ENCODE measurements at regions of chr20 and their contacts with region 1.

Region 1: GRCh38 chr20:6017880-6018279 is 36.0 kb downstream of the LRRN4 start:
- DNase-seq: no peak
- ATAC-seq: no peak
- H3K4me3 ChIP-seq: no peak overlapping the region
- H3K27ac ChIP-seq: no peak overlapping the region
- H3K4me1 ChIP-seq: no peaks in the 10 kb centered on the region
- H3K27me3 ChIP-seq: no peaks in the 10 kb centered on the region

Region 2: GRCh38 chr20:5797843-5798462 is 219.9 kb before region 1 on chr20:
- intact Hi-C with region 1: no loop called
- DNase-seq: peak in 2 of 3 donors; percentile 63 to 80
- ATAC-seq: no peak
- H3K4me3 ChIP-seq: no peak overlapping the region
- H3K27ac ChIP-seq: no peak overlapping the region
- H3K4me1 ChIP-seq: no peaks in the 10 kb centered on the region
- H3K27me3 ChIP-seq: no peaks in the 10 kb centered on the region

Region 3: DNA sequence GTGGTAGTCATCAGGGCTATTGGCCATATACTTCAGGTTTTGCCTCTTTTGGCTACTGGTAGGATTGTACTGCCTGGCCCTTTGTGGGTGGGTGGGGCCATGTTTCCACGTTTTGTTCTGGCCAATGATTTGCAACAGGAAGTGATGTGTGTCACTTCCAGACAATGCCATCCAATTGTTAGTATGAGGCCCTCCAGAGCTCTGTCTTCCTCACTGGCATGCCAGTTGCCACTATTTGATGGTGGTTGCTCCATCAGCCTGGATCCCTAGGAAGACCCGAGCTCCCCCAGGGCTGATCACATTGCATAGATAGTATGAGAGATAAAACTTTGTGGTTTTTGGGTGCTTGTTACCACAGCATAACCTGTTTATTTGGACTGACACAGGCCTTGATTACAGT is 43.7 kb after region 1 on chr20:
- intact Hi-C with region 1: loop called in 1 of 4 experiments (anchors 5 kb)
- DNase-seq: no peak
- ATAC-seq: no peak
- H3K4me3 ChIP-seq: no peak overlapping the region
- H3K27ac ChIP-seq: no peak overlapping the region
- H3K4me1 ChIP-seq: no peaks in the 10 kb centered on the region
- H3K27me3 ChIP-seq: no peaks in the 10 kb centered on the region